ENCODE measurements at regions of chrX and their contacts with region 1.

Region 1: GRCh38 chrX:13742397-13743176 is 8.0 kb downstream of the OFD1 start:
- DNase-seq: peak; percentile 71
- H3K4me3 Mint-ChIP-seq: peak overlapping the region; percentile 60
- H3K27ac Mint-ChIP-seq: peak overlapping the region; percentile 80
- H3K4me1 Mint-ChIP-seq: peaks cover 20% of the 10 kb centered on the region
- H3K27me3 Mint-ChIP-seq: no peaks in the 10 kb centered on the region

Region 2: GRCh38 chrX:13669246-13669737 is 73.3 kb before region 1 on chrX:
- CTCF ChIA-PET with region 1: interaction called, 3 read pairs
- POLR2A ChIA-PET with region 1: no interaction called
- intact Hi-C with region 1: loop called (anchors 1 kb)
- DNase-seq: peak; percentile 76
- H3K4me3 Mint-ChIP-seq: peak overlapping the region; percentile 70
- H3K27ac Mint-ChIP-seq: peak overlapping the region; percentile 95
- H3K4me1 Mint-ChIP-seq: peaks cover 24% of the 10 kb centered on the region
- H3K27me3 Mint-ChIP-seq: no peaks in the 10 kb centered on the region

Region 3: DNA sequence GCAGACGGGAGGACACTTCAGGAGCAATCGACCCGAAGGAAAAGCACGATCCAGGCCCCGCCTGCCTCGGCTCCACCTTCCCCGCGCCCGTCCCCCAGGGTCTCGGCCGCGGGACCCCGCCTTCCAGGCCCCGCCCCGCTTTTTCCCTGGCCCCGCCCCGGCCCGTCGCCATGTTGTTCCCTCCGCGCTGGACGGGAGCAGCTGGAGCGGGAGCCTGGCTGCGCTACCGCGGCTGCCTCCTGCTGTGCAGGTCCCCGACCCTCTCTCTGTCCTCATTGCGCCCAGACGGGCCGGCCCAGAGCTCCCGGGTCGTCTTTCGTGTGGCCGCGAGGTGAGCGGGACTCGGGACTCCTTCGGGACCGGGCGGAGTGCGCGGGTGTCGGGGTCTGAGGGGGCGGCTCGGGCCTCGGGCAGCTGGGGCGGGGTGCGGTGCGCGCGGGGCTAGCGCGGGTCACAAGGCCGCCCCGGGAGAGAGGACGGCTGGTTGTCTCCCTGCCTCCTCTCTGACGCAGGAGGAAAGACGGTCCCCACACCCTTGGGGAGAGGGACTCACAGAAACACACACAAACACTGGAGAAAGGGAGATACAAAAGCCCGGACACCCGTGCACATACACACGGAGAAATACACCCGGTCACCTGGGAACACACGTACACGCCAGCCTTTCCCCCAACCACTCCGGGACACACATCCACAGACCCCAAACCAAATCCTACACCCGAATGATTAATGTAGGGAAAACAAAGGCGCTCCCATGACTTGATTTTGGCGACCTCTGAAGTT is 53.4 kb before region 1 on chrX and contains the start of gene RAB9A:
- CTCF ChIA-PET with region 1: interaction called, 3 read pairs
- POLR2A ChIA-PET with region 1: no interaction called
- intact Hi-C with region 1: loop called (anchors 2 kb)
- DNase-seq: peak; percentile 88
- H3K4me3 Mint-ChIP-seq: peak within 1 kb of the TSS; percentile 87
- H3K27ac Mint-ChIP-seq: peak within 1 kb of the TSS; percentile 96
- H3K4me1 Mint-ChIP-seq: peaks cover 58% of the 10 kb centered on the region
- H3K27me3 Mint-ChIP-seq: no peaks in the 10 kb centered on the region
- total RNA-seq, gene RAB9A: 28.2 to 32.1 TPM

Region 4: GRCh38 chrX:13721819-13722519 is 20.6 kb before region 1 on chrX:
- CTCF ChIA-PET with region 1: no interaction called
- POLR2A ChIA-PET with region 1: no interaction called
- intact Hi-C with region 1: loop called (anchors 2 kb)
- DNase-seq: no peak
- H3K4me3 Mint-ChIP-seq: no peak overlapping the region
- H3K27ac Mint-ChIP-seq: no peak overlapping the region
- H3K4me1 Mint-ChIP-seq: peaks cover 57% of the 10 kb centered on the region
- H3K27me3 Mint-ChIP-seq: no peaks in the 10 kb centered on the region

Region 5: DNA sequence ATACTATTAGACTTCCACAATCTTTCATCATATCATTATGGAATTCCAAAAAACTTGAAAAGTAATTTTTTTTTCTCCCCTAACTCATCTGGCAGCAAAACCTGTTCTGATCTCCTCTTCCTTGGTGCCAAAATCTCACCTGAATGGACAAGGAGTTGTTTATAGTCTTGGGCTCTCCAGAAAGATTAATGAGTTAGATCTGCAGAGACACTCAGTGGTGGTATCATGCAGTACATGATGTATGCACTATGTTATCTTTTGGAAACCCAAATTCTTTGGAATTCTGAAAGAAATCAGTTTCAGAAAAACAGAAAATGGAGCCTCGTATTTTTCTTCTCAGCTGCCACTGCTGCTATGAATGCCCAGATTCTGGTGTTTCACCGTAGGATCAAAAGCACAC is 62.7 kb after region 1 on chrX:
- CTCF ChIA-PET with region 1: no interaction called
- POLR2A ChIA-PET with region 1: no interaction called
- intact Hi-C with region 1: no loop called
- DNase-seq: no peak
- H3K4me3 Mint-ChIP-seq: no peak overlapping the region
- H3K27ac Mint-ChIP-seq: no peak overlapping the region
- H3K4me1 Mint-ChIP-seq: no peaks in the 10 kb centered on the region
- H3K27me3 Mint-ChIP-seq: peaks cover 2% of the 10 kb centered on the region